CD14-positive monocyte (primary cell): ENCODE measurements at regions of chr3 and their contacts with region 1.

Region 1: GRCh38 chr3:18444595-18445400 is 19.7 kb upstream of the SATB1 start:
- DNase-seq: peak; percentile 52 to 65 (median 64)
- H3K4me3 ChIP-seq: peak overlapping the region; percentile 82 to 90 (median 83)
- H3K4me3 Mint-ChIP-seq: peak overlapping the region; percentile 99
- H3K27ac ChIP-seq: peak overlapping the region; percentile 10 to 13
- H3K27ac Mint-ChIP-seq: peak overlapping the region in 6 of 7 donors; percentile 69 to 91 (median 78)
- H3K4me1 ChIP-seq: peaks cover 31 to 37% of the 10 kb centered on the region in 2 donors
- H3K4me1 Mint-ChIP-seq: peaks cover 38% of the 10 kb centered on the region
- H3K27me3 ChIP-seq: peaks cover 2 to 9% of the 10 kb centered on the region in 2 donors
- H3K27me3 Mint-ChIP-seq: peaks cover 15 to 24% (median 21%) of the 10 kb centered on the region in 3 donors
- CTCF ChIP-seq: peak; percentile 35

Region 2: GRCh38 chr3:18740631-18741583 is 296.1 kb after region 1 on chr3:
- intact Hi-C with region 1: loop called in 1 of 2 experiments (anchors 10 kb)
- DNase-seq: peak; percentile 72 to 83 (median 81)
- H3K4me3 ChIP-seq: peak overlapping the region in 2 of 3 experiments; percentile 13 to 42
- H3K4me3 Mint-ChIP-seq: peak overlapping the region; percentile 44 to 89
- H3K27ac ChIP-seq: peak overlapping the region in 1 of 2 donors; percentile 56
- H3K27ac Mint-ChIP-seq: peak overlapping the region; percentile 83 to 93 (median 92)
- H3K4me1 ChIP-seq: peaks cover 26 to 51% of the 10 kb centered on the region in 2 donors
- H3K4me1 Mint-ChIP-seq: peaks cover 59% of the 10 kb centered on the region
- H3K27me3 ChIP-seq: no peaks in the 10 kb centered on the region
- H3K27me3 Mint-ChIP-seq: peaks cover 0 to 4% (median 4%) of the 10 kb centered on the region in 3 donors
- CTCF ChIP-seq: no peak

Region 3: GRCh38 chr3:18758047-18758704 is 313.4 kb after region 1 on chr3:
- intact Hi-C with region 1: loop called in 1 of 2 experiments (anchors 10 kb)
- DNase-seq: peak; percentile 55 to 75 (median 74)
- H3K4me3 ChIP-seq: no peak overlapping the region
- H3K4me3 Mint-ChIP-seq: no peak overlapping the region
- H3K27ac ChIP-seq: no peak overlapping the region
- H3K27ac Mint-ChIP-seq: no peak overlapping the region
- H3K4me1 ChIP-seq: no peaks in the 10 kb centered on the region
- H3K4me1 Mint-ChIP-seq: peaks cover 3% of the 10 kb centered on the region
- H3K27me3 ChIP-seq: no peaks in the 10 kb centered on the region
- H3K27me3 Mint-ChIP-seq: peaks cover 0 to 1% (median 1%) of the 10 kb centered on the region in 3 donors
- CTCF ChIP-seq: peak; percentile 94